ENCODE measurements at regions of chr12 and their contacts with region 1.

Region 1: GRCh38 chr12:122895705-122896636 is at the start of gene VPS37B:
- DNase-seq: peak; percentile 92
- H3K4me3 Mint-ChIP-seq: peak within 1 kb of the TSS; percentile 83
- H3K27ac Mint-ChIP-seq: peak within 1 kb of the TSS; percentile 83
- H3K4me1 Mint-ChIP-seq: peaks cover 86% of the 10 kb centered on the region
- H3K27me3 Mint-ChIP-seq: peaks cover 7% of the 10 kb centered on the region
- total RNA-seq, gene VPS37B: 15.6 TPM

Region 2: GRCh38 chr12:122413516-122414404 is 482.2 kb before region 1 on chr12:
- CTCF ChIA-PET with region 1: no interaction called
- intact Hi-C with region 1: loop called (anchors 5 kb)
- DNase-seq: no peak
- H3K4me3 Mint-ChIP-seq: peak overlapping the region; percentile 59
- H3K27ac Mint-ChIP-seq: peak overlapping the region; percentile 97
- H3K4me1 Mint-ChIP-seq: peaks cover 50% of the 10 kb centered on the region
- H3K27me3 Mint-ChIP-seq: no peaks in the 10 kb centered on the region

Region 3: DNA sequence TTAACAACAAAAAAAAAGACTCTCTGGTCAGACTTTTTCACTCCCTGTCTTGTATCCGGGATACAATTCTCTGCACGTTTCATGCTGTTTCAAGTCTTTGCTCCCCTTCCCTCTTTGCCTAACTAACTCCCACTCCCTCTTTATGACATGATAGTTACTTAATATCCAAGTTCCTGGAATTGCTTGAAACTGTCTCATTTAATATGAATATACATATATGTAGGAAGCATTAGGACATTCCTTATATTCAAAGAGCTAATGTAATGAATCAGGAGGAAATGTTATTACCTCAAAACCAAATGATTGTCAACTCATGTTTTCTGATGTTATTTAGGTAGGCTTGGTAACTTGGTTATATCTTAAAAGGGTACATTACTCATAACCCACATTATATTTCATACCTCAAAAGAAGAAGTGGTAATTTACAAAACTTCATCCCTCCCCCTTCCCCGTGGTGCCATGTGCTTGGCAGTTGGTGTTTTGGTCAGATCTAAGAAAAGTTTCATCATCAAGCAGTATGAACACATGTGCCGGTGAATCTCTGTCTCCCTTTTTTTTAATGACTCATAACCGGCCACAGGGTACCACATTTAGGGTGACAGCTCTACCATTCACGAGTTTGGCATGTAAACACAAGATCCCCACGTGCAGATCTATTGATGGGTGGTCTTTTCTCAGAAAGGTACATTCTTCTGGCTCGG is 249.3 kb before region 1 on chr12:
- CTCF ChIA-PET with region 1: no interaction called
- intact Hi-C with region 1: loop called (anchors 5 kb)
- DNase-seq: peak; percentile 81
- H3K4me3 Mint-ChIP-seq: peak overlapping the region; percentile 44
- H3K27ac Mint-ChIP-seq: peak overlapping the region; percentile 63
- H3K4me1 Mint-ChIP-seq: peaks cover 14% of the 10 kb centered on the region
- H3K27me3 Mint-ChIP-seq: no peaks in the 10 kb centered on the region

Region 4: DNA sequence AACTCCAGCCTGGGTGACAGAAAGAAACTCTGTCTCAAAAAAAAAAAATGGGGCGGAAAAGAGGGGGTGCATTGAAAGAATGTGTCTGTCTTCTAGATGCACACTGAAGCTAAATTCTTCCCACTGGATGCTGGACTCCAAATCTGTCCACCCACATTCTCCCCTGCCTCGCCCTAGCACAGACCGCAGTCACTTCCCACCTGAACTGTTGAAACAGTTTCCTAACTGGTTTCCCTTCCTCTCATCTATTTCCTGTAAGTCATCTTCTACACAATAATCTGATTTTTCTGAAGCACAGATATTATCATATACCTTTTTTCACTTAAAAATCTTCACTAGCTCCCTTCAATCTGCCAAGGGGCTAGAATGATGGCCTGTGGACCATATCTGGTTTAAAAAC is 163.8 kb before region 1 on chr12:
- CTCF ChIA-PET with region 1: no interaction called
- intact Hi-C with region 1: loop called (anchors 1 kb)
- DNase-seq: peak; percentile 69
- H3K4me3 Mint-ChIP-seq: no peak overlapping the region
- H3K27ac Mint-ChIP-seq: peak overlapping the region; percentile 89
- H3K4me1 Mint-ChIP-seq: peaks cover 75% of the 10 kb centered on the region
- H3K27me3 Mint-ChIP-seq: no peaks in the 10 kb centered on the region

Region 5: DNA sequence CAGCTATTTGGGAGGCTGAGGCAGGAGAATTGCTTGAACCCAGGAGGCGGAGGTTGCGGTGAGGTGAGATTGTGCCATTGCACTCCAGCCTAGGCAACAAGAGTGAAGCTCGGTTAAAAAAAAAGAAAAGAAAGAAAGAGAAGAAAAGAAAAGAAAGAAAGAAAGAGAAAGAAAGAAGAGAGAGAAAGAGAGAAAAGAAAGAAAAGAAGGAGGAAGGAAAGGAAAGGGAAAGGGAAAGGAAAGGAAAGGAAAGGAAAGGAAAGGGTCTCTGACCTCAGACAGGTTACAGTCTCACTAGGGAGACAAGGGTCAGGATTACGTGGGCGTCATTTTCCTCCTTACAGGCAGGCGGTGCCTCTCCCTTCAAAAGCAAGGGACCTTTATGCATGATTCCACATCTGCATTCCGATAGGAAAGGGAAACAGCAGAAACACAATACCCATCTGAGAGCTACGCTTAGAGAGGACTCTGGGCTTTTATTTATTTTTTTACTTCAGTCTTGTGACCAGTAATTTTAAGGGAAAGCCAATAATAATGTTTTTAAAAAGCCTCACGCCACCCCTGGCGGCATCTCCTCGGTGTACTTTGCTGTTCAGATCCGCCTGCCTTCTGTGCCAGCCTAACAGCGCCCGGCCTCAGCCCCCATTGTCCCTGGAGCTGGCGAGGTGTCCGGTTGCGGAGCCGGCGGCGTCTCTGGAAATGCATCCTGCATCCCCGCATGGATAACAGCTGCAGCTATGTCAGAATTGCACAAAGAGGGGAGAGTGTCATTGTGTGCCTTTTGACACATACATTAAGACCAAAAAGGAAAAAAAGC is 61.7 kb before region 1 on chr12:
- CTCF ChIA-PET with region 1: no interaction called
- intact Hi-C with region 1: loop called (anchors 1 kb)
- DNase-seq: peak; percentile 19
- H3K4me3 Mint-ChIP-seq: peak overlapping the region; percentile 87
- H3K27ac Mint-ChIP-seq: peak overlapping the region; percentile 62
- H3K4me1 Mint-ChIP-seq: peaks cover 22% of the 10 kb centered on the region
- H3K27me3 Mint-ChIP-seq: peaks cover 2% of the 10 kb centered on the region

Region 6: GRCh38 chr12:122871851-122872780 is 23.9 kb before region 1 on chr12:
- CTCF ChIA-PET with region 1: interaction called, 7 read pairs
- intact Hi-C with region 1: loop called (anchors 1 kb)
- DNase-seq: peak; percentile 85
- H3K4me3 Mint-ChIP-seq: peak overlapping the region; percentile 62
- H3K27ac Mint-ChIP-seq: peak overlapping the region; percentile 67
- H3K4me1 Mint-ChIP-seq: peaks cover 59% of the 10 kb centered on the region
- H3K27me3 Mint-ChIP-seq: peaks cover 23% of the 10 kb centered on the region

Region 7: GRCh38 chr12:122946690-122947341 is 50.8 kb after region 1 on chr12:
- CTCF ChIA-PET with region 1: no interaction called
- intact Hi-C with region 1: loop called (anchors 1 kb)
- DNase-seq: peak; percentile 96
- H3K4me3 Mint-ChIP-seq: no peak overlapping the region
- H3K27ac Mint-ChIP-seq: peak overlapping the region; percentile 83
- H3K4me1 Mint-ChIP-seq: peaks cover 17% of the 10 kb centered on the region
- H3K27me3 Mint-ChIP-seq: no peaks in the 10 kb centered on the region

Measured in activated naive CD4-positive, alpha-beta T cell treated with anti-CD3 and anti-CD28 coated beads for 36 hours (primary cell).